Dendritic cell treated with granulocyte-macrophage colony-stimulating factor and Interleukin-4, amounts not matched to agents 40 ng/mL and 50 ng/mL, for 4 days (primary cell): ENCODE measurements at regions of chr4 and their contacts with region 1.

Region 1: GRCh38 chr4:85233516-85233915 is 241.4 kb upstream of the ARHGAP24 start:
- H3K4me3 Mint-ChIP-seq: no peak overlapping the region
- H3K27ac Mint-ChIP-seq: no peak overlapping the region
- H3K4me1 Mint-ChIP-seq: no peaks in the 10 kb centered on the region
- H3K27me3 Mint-ChIP-seq: no peaks in the 10 kb centered on the region

Region 2: GRCh38 chr4:85268961-85269360 is 35.4 kb after region 1 on chr4:
- intact Hi-C with region 1: loop called (anchors 1 kb)
- H3K4me3 Mint-ChIP-seq: no peak overlapping the region
- H3K27ac Mint-ChIP-seq: no peak overlapping the region
- H3K4me1 Mint-ChIP-seq: no peaks in the 10 kb centered on the region
- H3K27me3 Mint-ChIP-seq: no peaks in the 10 kb centered on the region

Region 3: GRCh38 chr4:87038837-87039615 is 1805.5 kb after region 1 on chr4:
- intact Hi-C with region 1: no loop called
- H3K4me3 Mint-ChIP-seq: no peak overlapping the region
- H3K27ac Mint-ChIP-seq: no peak overlapping the region
- H3K4me1 Mint-ChIP-seq: peaks cover 56% of the 10 kb centered on the region
- H3K27me3 Mint-ChIP-seq: no peaks in the 10 kb centered on the region